ENCODE measurements at regions of chr1 and their contacts with region 1.

Region 1: DNA sequence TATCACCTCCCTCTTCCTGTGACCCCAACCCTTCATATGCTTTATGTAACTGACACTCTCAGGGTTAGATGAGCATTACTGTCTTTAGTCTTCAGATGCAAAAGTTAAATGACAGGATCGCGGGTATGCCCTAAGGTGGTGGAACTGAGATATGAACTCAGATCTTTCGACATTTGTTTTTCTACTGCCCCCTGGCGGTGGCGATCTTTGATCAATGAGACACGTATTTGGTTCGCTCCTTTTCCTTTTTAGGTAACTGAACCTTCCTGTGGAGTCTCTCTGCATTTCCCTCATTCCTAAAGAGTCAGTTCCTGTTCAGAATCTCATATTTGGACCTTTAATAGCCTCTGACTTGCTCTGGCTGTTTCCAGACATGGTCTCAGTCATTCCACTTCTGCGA is 47.8 kb upstream of the ZP4 start:
- DNase-seq: peak; percentile 23 to 80
- H3K4me3 ChIP-seq: no peak overlapping the region
- H3K27ac ChIP-seq: no peak overlapping the region
- H3K4me1 ChIP-seq: no peaks in the 10 kb centered on the region
- H3K27me3 ChIP-seq: no peaks in the 10 kb centered on the region
- CTCF ChIP-seq: peak in 2 of 3 experiments; percentile 52 to 65; a peak in 3 of 4 replicates
- EP300 ChIP-seq: no peak
- POLR2A ChIP-seq: no peak
- RAD21 ChIP-seq: peak; percentile 49 to 61

Region 2: DNA sequence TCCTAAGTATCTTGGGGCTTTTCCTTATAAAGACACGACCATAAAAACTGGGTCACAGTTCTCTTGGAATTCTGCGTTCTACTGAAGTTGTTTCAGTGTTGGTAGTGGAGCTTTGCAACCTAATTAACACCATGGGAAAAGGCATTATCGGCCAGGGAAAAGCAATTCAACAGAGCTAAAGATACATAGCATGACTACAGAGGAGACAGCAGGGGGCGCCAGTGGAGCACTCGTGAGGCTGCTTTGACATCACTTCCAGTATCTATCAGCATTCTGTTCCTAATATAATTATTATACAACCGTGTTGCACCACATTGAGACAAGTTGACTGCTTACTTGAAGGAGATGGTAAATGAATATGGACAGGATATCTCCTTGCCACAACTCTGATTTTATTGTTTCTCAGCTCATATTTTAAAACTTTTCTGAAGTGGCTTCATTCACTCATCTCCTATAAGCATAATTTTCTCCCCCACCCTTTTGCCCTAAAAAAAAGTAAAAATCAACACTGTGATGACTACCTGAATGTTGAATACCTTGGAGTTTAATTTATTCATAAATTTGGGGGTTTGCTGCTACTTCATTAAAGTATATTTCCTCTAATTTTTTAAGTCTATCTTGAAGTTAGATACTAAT is 87.2 kb before region 1 on chr1:
- CTCF ChIA-PET with region 1: interaction called, 46 read pairs
- POLR2A ChIA-PET with region 1: no interaction called
- DNase-seq: peak; percentile 41 to 82
- H3K4me3 ChIP-seq: no peak overlapping the region
- H3K27ac ChIP-seq: no peak overlapping the region
- H3K4me1 ChIP-seq: peaks cover 0 to 3% (median 0%) of the 10 kb centered on the region in 4 experiments; a peak in 2 of 7 replicates
- H3K27me3 ChIP-seq: no peaks in the 10 kb centered on the region
- CTCF ChIP-seq: peak; percentile 66 to 87 (median 76)
- EP300 ChIP-seq: no peak
- POLR2A ChIP-seq: no peak
- RAD21 ChIP-seq: peak; percentile 88 to 90

Region 3: GRCh38 chr1:237901299-237901934 is 37.1 kb before region 1 on chr1:
- CTCF ChIA-PET with region 1: interaction called, 18 read pairs
- POLR2A ChIA-PET with region 1: no interaction called
- DNase-seq: no peak
- H3K4me3 ChIP-seq: no peak overlapping the region
- H3K27ac ChIP-seq: no peak overlapping the region
- H3K4me1 ChIP-seq: no peaks in the 10 kb centered on the region
- H3K27me3 ChIP-seq: no peaks in the 10 kb centered on the region
- CTCF ChIP-seq: peak; percentile 43 to 71 (median 64)
- EP300 ChIP-seq: no peak
- POLR2A ChIP-seq: no peak
- RAD21 ChIP-seq: peak; percentile 47 to 59

Region 4: GRCh38 chr1:237927198-237927597 is 11.4 kb before region 1 on chr1:
- CTCF ChIA-PET with region 1: interaction called, 17 read pairs
- POLR2A ChIA-PET with region 1: interaction called, 3 read pairs
- DNase-seq: no peak
- H3K4me3 ChIP-seq: no peak overlapping the region
- H3K27ac ChIP-seq: no peak overlapping the region
- H3K4me1 ChIP-seq: no peaks in the 10 kb centered on the region
- H3K27me3 ChIP-seq: no peaks in the 10 kb centered on the region
- CTCF ChIP-seq: no peak
- EP300 ChIP-seq: no peak
- POLR2A ChIP-seq: no peak
- RAD21 ChIP-seq: no peak

Region 5: GRCh38 chr1:237953238-237953637 is 14.7 kb after region 1 on chr1:
- CTCF ChIA-PET with region 1: interaction called, 26 read pairs
- POLR2A ChIA-PET with region 1: no interaction called
- DNase-seq: no peak
- H3K4me3 ChIP-seq: no peak overlapping the region
- H3K27ac ChIP-seq: no peak overlapping the region
- H3K4me1 ChIP-seq: no peaks in the 10 kb centered on the region
- H3K27me3 ChIP-seq: no peaks in the 10 kb centered on the region
- CTCF ChIP-seq: peak in 2 of 3 experiments; percentile 36 to 74; a peak in 2 of 4 replicates
- EP300 ChIP-seq: no peak
- POLR2A ChIP-seq: no peak
- RAD21 ChIP-seq: peak; percentile 69 to 74

Region 6: GRCh38 chr1:238063454-238063853 is 124.9 kb after region 1 on chr1:
- CTCF ChIA-PET with region 1: no interaction called
- POLR2A ChIA-PET with region 1: no interaction called
- DNase-seq: no peak
- H3K4me3 ChIP-seq: no peak overlapping the region
- H3K27ac ChIP-seq: no peak overlapping the region
- H3K4me1 ChIP-seq: no peaks in the 10 kb centered on the region
- H3K27me3 ChIP-seq: no peaks in the 10 kb centered on the region
- CTCF ChIP-seq: no peak
- EP300 ChIP-seq: no peak
- POLR2A ChIP-seq: no peak
- RAD21 ChIP-seq: no peak

Measured in H1 (cell line).